Calu3 (cell line): ENCODE measurements at regions of chr5 and their contacts with region 1.

Region 1: DNA sequence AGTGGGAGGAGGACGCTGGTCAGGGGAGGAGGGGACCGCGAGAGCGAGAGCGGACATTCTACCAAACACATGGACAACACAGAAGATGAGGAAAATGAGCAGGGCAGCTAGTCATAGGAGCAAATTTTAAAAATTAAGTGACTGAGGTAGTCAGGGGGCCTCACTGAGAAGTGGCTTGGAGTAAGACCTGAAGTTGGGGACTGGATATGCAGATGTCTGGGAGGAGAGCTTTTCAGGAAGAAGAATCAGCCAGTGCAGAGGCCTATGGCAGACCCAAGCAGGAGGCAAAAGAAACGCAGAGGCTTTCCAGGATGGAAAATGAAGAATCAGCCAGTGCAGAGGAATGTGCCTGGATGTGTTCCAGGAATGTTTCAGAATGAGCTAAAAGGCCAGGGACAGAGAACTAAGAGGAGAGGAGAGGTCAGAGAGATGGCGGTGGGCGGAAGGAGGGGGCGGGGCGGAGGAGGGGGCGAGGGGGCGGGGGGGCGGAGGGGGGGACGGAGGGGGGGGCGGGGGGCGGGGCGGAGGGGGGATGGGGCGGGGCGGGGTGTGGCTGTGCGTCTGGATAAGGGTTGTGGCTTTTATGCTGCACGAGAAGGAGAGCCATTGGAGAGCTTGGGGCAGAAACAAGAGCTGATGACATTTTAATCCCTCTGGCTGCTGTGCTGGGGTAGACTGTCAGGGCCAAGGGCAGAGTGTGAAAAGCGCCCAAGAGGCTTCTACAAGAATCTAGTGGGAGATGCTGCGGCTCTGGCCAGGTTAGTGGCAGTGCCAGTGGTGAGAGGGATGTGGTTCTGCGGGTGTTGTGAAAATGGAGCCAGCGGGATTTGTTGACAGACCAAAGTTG is 129.6 kb downstream of the KCNIP1 start:
- DNase-seq: peak; percentile 48
- H3K4me3 Mint-ChIP-seq: peak overlapping the region; percentile 76
- H3K27ac Mint-ChIP-seq: peak overlapping the region; percentile 58
- H3K4me1 Mint-ChIP-seq: peaks cover 25% of the 10 kb centered on the region
- H3K27me3 Mint-ChIP-seq: peaks cover 38% of the 10 kb centered on the region
- CTCF ChIP-seq: no peak

Region 2: DNA sequence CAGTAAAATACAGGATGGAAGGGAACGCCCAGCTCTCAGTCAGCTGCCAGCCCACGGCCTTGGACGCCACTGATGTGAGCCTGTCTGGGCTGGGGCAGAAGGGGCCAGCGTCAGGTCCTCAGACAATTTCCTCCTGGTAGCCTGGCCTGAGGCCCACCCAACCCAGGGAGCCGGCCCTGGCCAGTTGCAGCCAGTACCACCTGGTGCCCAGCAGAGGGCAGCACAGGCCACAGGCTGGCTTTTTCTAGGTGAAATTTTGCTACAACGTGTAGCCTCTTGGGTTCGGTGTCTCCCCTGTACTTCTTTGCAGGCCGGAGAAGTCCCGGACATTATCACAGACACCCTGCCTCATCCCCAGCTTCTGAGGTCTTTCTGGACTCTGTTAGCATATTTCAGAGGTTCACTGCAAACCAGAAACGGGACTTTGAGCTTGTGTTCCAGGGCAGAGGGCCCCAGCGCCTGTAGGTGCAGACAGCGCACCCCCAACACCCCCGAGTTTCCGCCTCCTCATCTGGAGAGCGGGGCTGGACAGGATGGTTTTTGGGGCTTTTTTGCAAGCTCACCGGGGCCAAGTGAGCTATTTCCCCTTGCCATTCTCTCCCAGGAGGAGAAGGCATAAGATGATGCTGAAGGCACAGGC is 198.4 kb before region 1 on chr5:
- CTCF ChIA-PET with region 1: interaction called, 21 read pairs
- intact Hi-C with region 1: no loop called
- DNase-seq: peak; percentile 79
- H3K4me3 Mint-ChIP-seq: no peak overlapping the region
- H3K27ac Mint-ChIP-seq: no peak overlapping the region
- H3K4me1 Mint-ChIP-seq: peaks cover 5% of the 10 kb centered on the region
- H3K27me3 Mint-ChIP-seq: peaks cover 44% of the 10 kb centered on the region
- CTCF ChIP-seq: peak; percentile 99

Region 3: DNA sequence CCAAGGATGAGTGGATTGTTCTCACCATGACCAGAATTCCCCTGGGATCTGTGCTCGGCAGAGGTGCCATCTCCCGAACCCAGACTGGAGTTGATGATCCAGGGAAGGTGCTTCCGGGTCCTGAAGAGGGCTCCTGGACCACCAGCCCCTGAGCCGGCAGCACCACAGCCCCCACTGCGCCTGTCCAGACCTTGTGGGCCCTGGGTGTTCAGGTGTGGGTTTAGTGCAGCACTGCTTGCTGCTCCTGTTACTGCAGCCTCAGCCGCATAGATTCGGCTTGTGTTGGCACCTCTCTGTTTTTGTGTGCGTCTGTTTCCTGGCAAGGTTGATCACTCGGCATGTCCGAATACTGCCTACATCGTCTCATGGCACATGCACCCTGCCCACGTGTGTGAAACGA is 737.9 kb after region 1 on chr5:
- CTCF ChIA-PET with region 1: no interaction called
- intact Hi-C with region 1: no loop called
- DNase-seq: no peak
- H3K4me3 Mint-ChIP-seq: no peak overlapping the region
- H3K27ac Mint-ChIP-seq: no peak overlapping the region
- H3K4me1 Mint-ChIP-seq: no peaks in the 10 kb centered on the region
- H3K27me3 Mint-ChIP-seq: no peaks in the 10 kb centered on the region
- CTCF ChIP-seq: no peak